Right cardiac atrium (tissue), 5 donors: ENCODE measurements at regions of chr19 and their contacts with region 1.

Region 1: DNA sequence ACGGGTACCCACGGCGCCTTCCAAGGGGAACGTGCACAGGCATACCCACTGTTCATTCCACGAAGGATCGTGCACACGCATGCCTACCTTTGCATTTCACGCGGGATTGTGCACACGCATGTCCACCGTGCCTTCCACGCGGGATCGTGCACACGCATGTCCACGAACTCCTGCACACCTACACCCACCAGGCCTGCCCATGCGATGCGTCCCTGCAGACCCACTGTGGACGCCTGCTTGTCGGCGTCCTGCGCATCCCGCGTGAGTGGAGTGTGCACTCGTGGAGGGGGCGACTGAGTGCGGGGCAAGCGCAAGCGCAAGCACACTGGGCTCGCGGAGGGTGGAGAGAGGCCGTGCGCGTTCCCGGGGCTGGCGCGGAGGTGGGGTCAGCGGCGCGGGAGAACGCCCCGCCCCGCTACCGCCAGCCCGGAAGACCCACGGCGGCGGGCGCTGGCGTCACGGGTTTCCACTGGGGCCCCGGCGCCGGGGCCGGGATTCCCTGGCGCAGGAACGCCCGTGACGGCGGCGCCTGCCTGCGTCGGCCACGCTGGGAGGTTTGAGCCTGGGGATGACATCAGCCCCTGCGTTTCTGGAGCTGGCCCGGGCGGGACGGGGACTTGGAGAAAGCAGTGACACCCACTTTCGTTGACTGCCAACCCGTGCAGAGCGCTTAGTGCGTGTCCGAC is 18.7 kb downstream of the GADD45B start:
- DNase-seq: peak; percentile 94 to 95 (median 94)
- ATAC-seq: peak; percentile 84 to 90
- H3K4me3 ChIP-seq: peak overlapping the region; percentile 50
- H3K27ac ChIP-seq: peak overlapping the region; percentile 90
- H3K4me1 ChIP-seq: peaks cover 5% of the 10 kb centered on the region
- H3K27me3 ChIP-seq: no peaks in the 10 kb centered on the region

Region 2: GRCh38 chr19:2537584-2538433 is 43.2 kb after region 1 on chr19:
- intact Hi-C with region 1: loop called in 2 of 4 experiments (anchors 5 kb)
- DNase-seq: peak; percentile 3 to 18 (median 18)
- ATAC-seq: no peak
- H3K4me3 ChIP-seq: no peak overlapping the region
- H3K27ac ChIP-seq: no peak overlapping the region
- H3K4me1 ChIP-seq: peaks cover 10% of the 10 kb centered on the region
- H3K27me3 ChIP-seq: no peaks in the 10 kb centered on the region